Posterior cingulate gyrus (tissue), 11 donors: ENCODE measurements at regions of chr1 and their contacts with region 1.

Region 1: DNA sequence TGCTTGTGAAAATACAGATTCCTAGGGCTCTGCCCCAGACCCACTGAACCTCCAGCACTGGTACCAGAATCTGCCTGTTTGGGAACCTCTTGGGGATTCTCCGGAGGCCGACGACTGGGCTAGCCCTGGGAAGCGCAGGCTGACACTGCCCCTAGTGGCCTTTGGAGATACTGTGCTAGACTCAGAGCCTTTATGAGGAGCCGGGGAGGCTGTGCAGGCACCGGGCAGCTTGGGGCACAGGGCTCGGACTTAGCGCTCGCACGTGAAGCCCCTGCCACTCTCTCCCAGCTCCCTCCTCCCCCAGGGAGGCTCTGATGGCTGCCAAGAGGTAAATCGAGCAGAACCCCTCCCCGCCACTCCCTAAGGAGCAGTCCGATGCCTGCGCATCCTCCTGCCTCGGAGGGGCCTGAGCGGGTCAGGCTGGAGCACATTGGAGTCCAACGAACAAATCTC is 144.6 kb upstream of the TNR start:
- DNase-seq: peak; percentile 61 to 98 (median 82)

Region 2: DNA sequence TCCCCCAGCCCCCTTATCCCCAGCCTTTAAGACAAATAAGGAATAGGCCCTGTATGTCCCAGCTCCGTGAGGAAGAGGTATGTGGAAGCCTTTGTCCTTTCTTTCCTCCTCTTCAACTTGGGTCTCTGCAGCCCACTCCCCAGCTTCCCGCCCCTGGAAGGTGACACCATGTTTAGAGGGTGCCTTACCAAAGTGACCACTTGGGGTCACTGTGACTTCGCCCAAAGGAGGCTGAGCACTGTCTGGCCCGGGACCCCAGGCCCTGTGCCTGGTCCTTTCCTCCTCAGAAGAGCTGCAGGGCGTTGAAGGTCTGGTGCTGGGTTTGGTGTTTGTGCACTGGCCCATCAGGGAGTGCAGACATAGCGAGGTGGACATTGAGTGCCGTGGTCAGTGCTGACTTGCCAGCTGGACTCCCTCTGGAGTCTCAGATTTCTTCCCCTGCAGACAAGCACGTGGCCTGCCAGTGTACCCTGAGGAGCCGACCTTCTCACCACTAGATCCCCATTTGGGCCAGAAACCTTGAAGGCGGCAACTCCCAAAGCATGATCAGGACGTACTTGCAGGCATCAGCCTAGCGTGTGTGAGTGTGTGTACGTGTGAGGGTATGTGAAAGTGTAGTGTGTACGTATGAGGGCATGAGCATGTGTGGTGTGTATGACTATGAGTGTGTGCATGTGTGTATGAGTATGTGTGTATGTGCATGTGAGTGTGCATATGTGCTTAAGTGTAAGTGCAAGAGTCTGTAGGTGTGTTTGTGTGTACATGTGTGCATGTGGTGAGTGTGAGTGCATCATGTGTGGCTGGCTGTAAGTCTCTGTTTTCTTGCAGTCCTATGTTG is 514.0 kb before region 1 on chr1:
- intact Hi-C with region 1: loop called (anchors 10 kb)
- DNase-seq: peak in 7 of 10 donors; percentile 17 to 88 (median 48)

Region 3: GRCh38 chr1:175498002-175498401 is 390.0 kb before region 1 on chr1:
- intact Hi-C with region 1: loop called (anchors 10 kb)
- DNase-seq: no peak

Region 4: GRCh38 chr1:175690298-175690697 is 197.7 kb before region 1 on chr1:
- intact Hi-C with region 1: no loop called
- DNase-seq: no peak

Region 5: DNA sequence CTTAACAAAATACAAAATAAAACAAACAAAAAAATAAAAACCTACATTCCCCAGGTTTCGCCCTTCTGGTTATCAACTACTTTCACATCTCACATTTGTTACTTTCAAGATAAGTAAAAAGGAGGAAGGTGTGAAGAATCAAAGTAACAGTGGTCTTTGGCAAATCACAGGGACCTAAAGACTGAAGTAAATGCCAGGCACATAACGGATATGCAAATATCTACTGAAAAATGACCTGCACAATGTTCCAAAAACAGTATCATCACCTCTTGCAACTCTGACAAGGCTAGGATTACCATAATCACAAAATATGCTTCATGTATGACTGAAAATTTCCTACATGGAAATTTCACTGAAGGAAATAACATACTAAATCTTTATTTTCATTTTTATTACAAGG is 289.8 kb after region 1 on chr1:
- intact Hi-C with region 1: no loop called
- DNase-seq: no peak